Activated naive CD4-positive, alpha-beta T cell treated with anti-CD3 and anti-CD28 coated beads for 36 hours (primary cell): ENCODE measurements at regions of chr2 and their contacts with region 1.

Region 1: DNA sequence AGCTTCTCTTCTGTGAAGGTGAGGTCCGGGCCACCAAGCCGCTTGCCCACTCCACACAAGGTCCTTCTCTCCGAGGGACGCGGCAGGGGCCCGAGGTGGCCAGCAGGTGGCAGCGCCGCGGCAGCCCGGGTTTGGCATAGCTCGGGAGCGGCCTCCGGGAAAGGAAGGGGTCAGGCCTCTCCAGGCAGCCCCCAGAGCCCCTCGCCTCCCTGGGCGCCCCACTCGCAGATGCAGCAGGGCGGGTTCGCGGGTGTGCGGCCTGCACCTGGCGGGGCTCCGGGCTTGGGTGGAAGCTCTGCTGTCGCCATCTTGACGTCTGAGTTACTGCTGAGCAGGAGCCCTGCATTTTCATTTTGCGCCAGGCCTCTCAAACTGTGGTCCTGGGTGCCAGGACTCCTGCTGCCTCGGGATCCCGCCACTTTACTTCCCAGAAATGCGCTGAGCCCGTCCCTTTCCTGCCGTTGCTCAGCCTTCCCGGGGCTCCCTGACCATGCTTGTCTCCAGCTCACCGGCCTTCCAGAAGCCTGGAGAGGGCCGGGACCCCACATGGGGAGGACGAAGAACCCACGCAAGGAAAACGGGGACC is 18.6 kb upstream of the NCL start:
- DNase-seq: peak; percentile 78
- H3K4me3 Mint-ChIP-seq: peak overlapping the region; percentile 83
- H3K27ac Mint-ChIP-seq: peak overlapping the region; percentile 89
- H3K4me1 Mint-ChIP-seq: peaks cover 13% of the 10 kb centered on the region
- H3K27me3 Mint-ChIP-seq: no peaks in the 10 kb centered on the region

Region 2: DNA sequence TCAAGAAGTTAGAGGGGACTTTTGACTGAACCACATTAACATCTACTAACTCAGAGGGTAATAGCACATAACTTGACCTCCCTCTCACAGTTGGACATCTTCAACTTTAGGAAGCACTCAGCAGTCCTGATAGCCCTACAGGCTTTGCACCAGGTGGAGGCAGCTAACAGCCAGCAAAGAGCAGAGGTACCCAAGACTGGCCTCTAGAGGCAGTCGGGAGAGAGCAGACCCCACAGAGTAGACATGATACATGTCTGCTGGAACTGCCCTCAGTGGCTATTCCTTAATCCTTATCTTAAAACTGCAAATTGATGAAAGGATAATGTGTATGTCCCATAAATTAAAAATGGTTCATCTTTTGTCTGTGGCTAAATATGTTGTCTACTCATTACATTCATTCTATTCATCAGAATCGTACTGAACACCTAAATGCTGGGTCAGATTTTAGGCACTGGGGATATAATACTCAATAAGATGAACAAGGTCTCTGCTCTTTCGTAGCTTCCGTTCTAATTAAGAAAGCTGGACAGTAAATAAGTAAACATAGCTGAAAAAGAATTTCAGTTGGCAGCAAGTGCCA is 720.5 kb before region 1 on chr2:
- CTCF ChIA-PET with region 1: no interaction called
- intact Hi-C with region 1: no loop called
- DNase-seq: peak; percentile 45
- H3K4me3 Mint-ChIP-seq: no peak overlapping the region
- H3K27ac Mint-ChIP-seq: no peak overlapping the region
- H3K4me1 Mint-ChIP-seq: peaks cover 61% of the 10 kb centered on the region
- H3K27me3 Mint-ChIP-seq: no peaks in the 10 kb centered on the region

Region 3: DNA sequence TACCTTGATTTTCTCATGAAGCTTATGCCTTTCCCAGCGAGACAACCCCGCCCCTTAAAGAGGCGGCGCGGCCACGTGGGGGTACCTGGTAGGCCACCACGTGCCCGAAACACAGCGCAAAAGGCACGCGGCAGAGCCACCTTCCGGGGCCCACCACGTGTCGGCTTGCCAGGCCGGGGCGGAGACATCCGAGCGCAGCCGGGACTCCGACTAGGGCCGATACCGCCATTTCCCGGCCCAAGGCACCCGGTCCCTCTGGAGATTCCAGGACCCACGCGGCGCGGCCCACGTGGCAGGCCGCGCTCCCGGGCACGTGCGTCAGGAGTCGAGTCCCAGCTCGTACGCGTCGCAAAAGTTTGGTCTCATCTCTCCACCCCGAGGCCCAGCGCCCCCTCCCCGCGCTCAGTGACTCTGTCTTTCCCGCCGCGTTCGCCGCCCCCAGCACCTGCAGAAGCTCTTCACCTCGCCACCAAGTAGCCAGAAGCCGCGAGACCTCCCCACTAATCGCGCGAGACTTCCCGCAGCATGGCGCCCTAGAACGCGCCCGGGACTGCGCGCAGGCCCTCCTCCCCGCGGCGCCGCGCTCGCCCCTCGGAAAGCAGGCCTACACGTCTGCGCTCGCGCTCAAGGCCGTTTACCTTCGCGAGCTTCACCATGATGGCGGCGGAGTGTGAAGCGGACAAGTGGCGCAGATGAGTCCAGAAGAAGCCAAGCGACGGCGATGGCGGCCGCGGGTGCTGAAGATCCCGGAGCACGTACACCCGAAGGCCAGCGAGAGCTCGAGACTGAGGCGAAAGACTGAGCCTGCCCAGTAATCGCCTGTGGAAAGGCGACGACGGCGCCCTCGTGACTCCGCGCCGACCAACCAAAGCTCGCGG is 19.0 kb before region 1 on chr2 and contains the start of gene NCL:
- CTCF ChIA-PET with region 1: interaction called, 30 read pairs
- intact Hi-C with region 1: loop called (anchors 1 kb)
- DNase-seq: peak; percentile 87
- H3K4me3 Mint-ChIP-seq: peak within 1 kb of the TSS; percentile 97
- H3K27ac Mint-ChIP-seq: peak within 1 kb of the TSS; percentile 98
- H3K4me1 Mint-ChIP-seq: peaks cover 46% of the 10 kb centered on the region
- H3K27me3 Mint-ChIP-seq: no peaks in the 10 kb centered on the region
- total RNA-seq, gene NCL: 908 to 911 TPM